ENCODE measurements at regions of chr10 and their contacts with region 1.

Region 1: GRCh38 chr10:31928549-31929260 is at the start of gene ARHGAP12:
- DNase-seq: peak; percentile 82 to 92
- ATAC-seq: peak; percentile 88 to 91
- H3K4me3 ChIP-seq: peak within 1 kb of the TSS; percentile 88 to 98 (median 90)
- H3K27ac ChIP-seq: peak within 1 kb of the TSS; percentile 98
- H3K4me1 ChIP-seq: peaks cover 25 to 33% of the 10 kb centered on the region in 2 donors
- H3K27me3 ChIP-seq: no peaks in the 10 kb centered on the region
- CTCF ChIP-seq: peak in 1 of 5 experiments; percentile 12
- POLR2A ChIP-seq: peak; percentile 97 to 99
- total RNA-seq, gene ARHGAP12: 17.0 to 34.3 (median 21.6) TPM

Region 2: GRCh38 chr10:31759799-31760626 is 168.7 kb before region 1 on chr10:
- in situ Hi-C with region 1: no loop called
- intact Hi-C with region 1: loop called (anchors 5 kb)
- DNase-seq: peak; percentile 95
- ATAC-seq: peak; percentile 88 to 92
- H3K4me3 ChIP-seq: peak overlapping the region; percentile 67 to 89 (median 83)
- H3K27ac ChIP-seq: peak overlapping the region; percentile 95 to 97 (median 96)
- H3K4me1 ChIP-seq: peaks cover 16 to 33% of the 10 kb centered on the region in 2 donors
- H3K27me3 ChIP-seq: no peaks in the 10 kb centered on the region
- CTCF ChIP-seq: no peak
- POLR2A ChIP-seq: peak; percentile 88 to 93

Region 3: GRCh38 chr10:31864834-31865518 is 63.7 kb before region 1 on chr10:
- in situ Hi-C with region 1: loop called in 1 of 4 experiments (anchors 10 kb)
- intact Hi-C with region 1: loop called (anchors 5 kb)
- DNase-seq: no peak
- ATAC-seq: no peak
- H3K4me3 ChIP-seq: peak overlapping the region; percentile 1 to 22 (median 4)
- H3K27ac ChIP-seq: peak overlapping the region in 3 of 4 donors; percentile 31 to 44 (median 41)
- H3K4me1 ChIP-seq: peaks cover 28 to 32% of the 10 kb centered on the region in 2 donors
- H3K27me3 ChIP-seq: no peaks in the 10 kb centered on the region
- CTCF ChIP-seq: no peak
- POLR2A ChIP-seq: no peak

Region 4: GRCh38 chr10:31875608-31876007 is 53.1 kb before region 1 on chr10:
- in situ Hi-C with region 1: loop called in 1 of 4 experiments (anchors 10 kb)
- intact Hi-C with region 1: no loop called
- DNase-seq: no peak
- ATAC-seq: no peak
- H3K4me3 ChIP-seq: no peak overlapping the region
- H3K27ac ChIP-seq: no peak overlapping the region
- H3K4me1 ChIP-seq: peaks cover 26 to 28% of the 10 kb centered on the region in 2 donors
- H3K27me3 ChIP-seq: no peaks in the 10 kb centered on the region
- CTCF ChIP-seq: no peak
- POLR2A ChIP-seq: no peak

Region 5: GRCh38 chr10:31977440-31978155 is 48.9 kb after region 1 on chr10:
- in situ Hi-C with region 1: no loop called
- intact Hi-C with region 1: no loop called
- DNase-seq: no peak
- ATAC-seq: no peak
- H3K4me3 ChIP-seq: no peak overlapping the region
- H3K27ac ChIP-seq: no peak overlapping the region
- H3K4me1 ChIP-seq: no peaks in the 10 kb centered on the region
- H3K27me3 ChIP-seq: no peaks in the 10 kb centered on the region
- CTCF ChIP-seq: no peak
- POLR2A ChIP-seq: no peak

Region 6: GRCh38 chr10:32005050-32005449 is 76.3 kb after region 1 on chr10:
- in situ Hi-C with region 1: no loop called
- intact Hi-C with region 1: no loop called
- DNase-seq: no peak
- ATAC-seq: peak; percentile 48 to 65
- H3K4me3 ChIP-seq: no peak overlapping the region
- H3K27ac ChIP-seq: no peak overlapping the region
- H3K4me1 ChIP-seq: peaks cover 12 to 15% of the 10 kb centered on the region in 2 donors
- H3K27me3 ChIP-seq: no peaks in the 10 kb centered on the region
- CTCF ChIP-seq: peak; percentile 24 to 55 (median 36)
- POLR2A ChIP-seq: no peak

Region 7: DNA sequence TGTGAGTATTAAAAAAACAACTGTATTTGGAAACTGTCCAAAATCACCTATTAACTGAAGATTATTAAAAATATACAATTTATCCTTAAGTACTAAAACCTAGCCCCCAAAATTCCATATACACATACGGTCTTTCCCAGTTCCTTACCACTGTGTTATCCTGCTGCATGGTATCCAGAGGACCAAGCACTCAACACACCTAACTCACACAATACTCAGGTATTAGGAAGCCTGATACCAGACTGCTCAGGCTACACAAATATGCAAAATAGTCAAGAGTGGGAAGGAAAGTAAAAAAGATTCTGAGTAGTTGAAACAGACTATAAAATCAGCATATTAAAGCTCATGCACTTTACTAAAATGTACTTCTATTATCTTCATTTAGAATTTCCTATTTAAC is 351.1 kb after region 1 on chr10:
- in situ Hi-C with region 1: no loop called
- intact Hi-C with region 1: no loop called
- DNase-seq: no peak
- ATAC-seq: no peak
- H3K4me3 ChIP-seq: no peak overlapping the region
- H3K27ac ChIP-seq: no peak overlapping the region
- H3K4me1 ChIP-seq: no peaks in the 10 kb centered on the region
- H3K27me3 ChIP-seq: no peaks in the 10 kb centered on the region
- CTCF ChIP-seq: no peak
- POLR2A ChIP-seq: no peak